Calu3 (cell line): ENCODE measurements at regions of chr2 and their contacts with region 1.

Region 1: GRCh38 chr2:210399440-210400041 is 77.0 kb downstream of the LANCL1 start:
- DNase-seq: no peak
- H3K4me3 Mint-ChIP-seq: no peak overlapping the region
- H3K27ac Mint-ChIP-seq: no peak overlapping the region
- H3K4me1 Mint-ChIP-seq: no peaks in the 10 kb centered on the region
- H3K27me3 Mint-ChIP-seq: no peaks in the 10 kb centered on the region
- CTCF ChIP-seq: peak; percentile 15

Region 2: GRCh38 chr2:209977386-209978239 is 421.9 kb before region 1 on chr2:
- CTCF ChIA-PET with region 1: interaction called, 3 read pairs
- intact Hi-C with region 1: loop called (anchors 2 kb)
- DNase-seq: no peak
- H3K4me3 Mint-ChIP-seq: no peak overlapping the region
- H3K27ac Mint-ChIP-seq: no peak overlapping the region
- H3K4me1 Mint-ChIP-seq: peaks cover 13% of the 10 kb centered on the region
- H3K27me3 Mint-ChIP-seq: no peaks in the 10 kb centered on the region
- CTCF ChIP-seq: peak; percentile 64

Region 3: GRCh38 chr2:210252699-210253606 is 146.6 kb before region 1 on chr2:
- CTCF ChIA-PET with region 1: interaction called, 6 read pairs
- intact Hi-C with region 1: loop called (anchors 1 kb)
- DNase-seq: no peak
- H3K4me3 Mint-ChIP-seq: no peak overlapping the region
- H3K27ac Mint-ChIP-seq: no peak overlapping the region
- H3K4me1 Mint-ChIP-seq: no peaks in the 10 kb centered on the region
- H3K27me3 Mint-ChIP-seq: no peaks in the 10 kb centered on the region
- CTCF ChIP-seq: no peak

Region 4: GRCh38 chr2:210337159-210337558 is 62.4 kb before region 1 on chr2:
- CTCF ChIA-PET with region 1: no interaction called
- intact Hi-C with region 1: loop called (anchors 2 kb)
- DNase-seq: no peak
- H3K4me3 Mint-ChIP-seq: no peak overlapping the region
- H3K27ac Mint-ChIP-seq: no peak overlapping the region
- H3K4me1 Mint-ChIP-seq: no peaks in the 10 kb centered on the region
- H3K27me3 Mint-ChIP-seq: no peaks in the 10 kb centered on the region
- CTCF ChIP-seq: no peak